ENCODE measurements at regions of chr3 and their contacts with region 1.

Region 1: GRCh38 chr3:177378168-177378567 is 180.9 kb upstream of the TBL1XR1 start:
- DNase-seq: peak; percentile 70
- ATAC-seq: peak; percentile 43
- H3K4me3 ChIP-seq: no peak overlapping the region
- H3K4me3 Mint-ChIP-seq: peak overlapping the region; percentile 59
- H3K27ac ChIP-seq: no peak overlapping the region
- H3K27ac Mint-ChIP-seq: peak overlapping the region; percentile 47
- H3K4me1 ChIP-seq: peaks cover 22% of the 10 kb centered on the region in 2 donors
- H3K4me1 Mint-ChIP-seq: peaks cover 40% of the 10 kb centered on the region
- H3K27me3 ChIP-seq: no peaks in the 10 kb centered on the region
- H3K27me3 Mint-ChIP-seq: no peaks in the 10 kb centered on the region
- CTCF ChIP-seq: no peak

Region 2: DNA sequence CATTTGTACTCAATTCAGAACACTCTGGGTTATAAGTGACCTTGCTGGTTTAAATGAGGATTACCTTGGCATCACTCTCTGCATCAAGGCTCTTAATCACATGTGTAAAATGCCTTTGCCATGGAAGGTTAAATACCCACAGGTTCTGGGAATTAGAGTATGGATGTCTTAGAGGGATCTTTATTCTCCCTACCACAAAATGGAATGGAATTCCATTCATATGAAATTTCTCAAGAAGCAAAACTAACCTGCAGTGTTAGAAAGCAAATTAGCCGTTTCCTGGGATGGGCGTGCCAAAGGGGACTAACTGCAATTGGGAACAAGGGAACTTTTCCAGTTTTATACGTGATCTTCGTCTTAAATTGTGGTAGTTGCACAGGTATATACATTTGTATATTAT is 220.7 kb before region 1 on chr3:
- CTCF ChIA-PET with region 1: no interaction called
- POLR2A ChIA-PET with region 1: no interaction called
- intact Hi-C with region 1: no loop called
- DNase-seq: no peak
- ATAC-seq: no peak
- H3K4me3 ChIP-seq: no peak overlapping the region
- H3K4me3 Mint-ChIP-seq: no peak overlapping the region
- H3K27ac ChIP-seq: no peak overlapping the region
- H3K27ac Mint-ChIP-seq: no peak overlapping the region
- H3K4me1 ChIP-seq: no peaks in the 10 kb centered on the region
- H3K4me1 Mint-ChIP-seq: peaks cover 43% of the 10 kb centered on the region
- H3K27me3 ChIP-seq: no peaks in the 10 kb centered on the region
- H3K27me3 Mint-ChIP-seq: no peaks in the 10 kb centered on the region
- CTCF ChIP-seq: no peak

Region 3: GRCh38 chr3:177350111-177350510 is 28.1 kb before region 1 on chr3:
- CTCF ChIA-PET with region 1: no interaction called
- POLR2A ChIA-PET with region 1: interaction called, 11 read pairs
- intact Hi-C with region 1: no loop called
- DNase-seq: no peak
- ATAC-seq: no peak
- H3K4me3 ChIP-seq: no peak overlapping the region
- H3K4me3 Mint-ChIP-seq: peak overlapping the region; percentile 35
- H3K27ac ChIP-seq: no peak overlapping the region
- H3K27ac Mint-ChIP-seq: peak overlapping the region; percentile 53
- H3K4me1 ChIP-seq: peaks cover 59 to 72% of the 10 kb centered on the region in 2 donors
- H3K4me1 Mint-ChIP-seq: peaks cover 68% of the 10 kb centered on the region
- H3K27me3 ChIP-seq: no peaks in the 10 kb centered on the region
- H3K27me3 Mint-ChIP-seq: no peaks in the 10 kb centered on the region
- CTCF ChIP-seq: no peak